ENCODE measurements at regions of chr16 and their contacts with region 1.

Region 1: GRCh38 chr16:75074920-75075687 is 41.5 kb downstream of the LDHD start:
- DNase-seq: peak; percentile 97 to 100 (median 99)
- H3K4me3 ChIP-seq: peak overlapping the region in 4 of 7 experiments; percentile 2 to 48 (median 22)
- H3K27ac ChIP-seq: peak overlapping the region; percentile 61 to 80
- H3K4me1 ChIP-seq: peaks cover 20 to 97% (median 89%) of the 10 kb centered on the region in 4 experiments
- H3K27me3 ChIP-seq: no peaks in the 10 kb centered on the region

Region 2: DNA sequence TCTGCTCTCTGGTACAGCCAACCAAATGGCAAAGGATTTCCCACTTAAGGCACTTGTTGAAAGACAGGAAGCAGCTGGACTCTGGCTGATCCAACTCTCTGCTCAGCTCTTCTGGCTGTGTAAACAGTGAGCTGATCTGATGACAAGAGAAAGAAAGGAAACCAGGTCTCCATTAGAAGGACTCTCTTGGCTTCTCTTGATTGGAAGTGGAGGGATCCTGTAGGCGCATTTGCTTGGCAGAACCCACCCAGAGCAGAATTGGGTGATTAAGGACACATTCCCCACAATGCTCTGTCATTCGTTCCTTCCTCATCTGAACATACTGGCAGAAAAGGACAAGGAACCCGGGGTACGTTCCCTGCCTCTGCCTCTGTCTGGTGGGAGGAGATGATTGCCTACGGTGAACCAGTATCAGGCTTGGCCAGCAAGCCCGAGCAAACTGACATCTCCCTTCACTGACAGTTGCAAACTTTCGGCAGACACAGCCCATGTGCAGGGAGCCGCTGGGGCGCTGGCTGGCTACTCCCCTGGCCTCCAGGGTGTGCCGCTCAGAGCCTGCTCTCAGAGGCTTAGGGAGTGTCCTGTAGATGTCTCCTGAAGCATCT is 12.4 kb after region 1 on chr16:
- CTCF ChIA-PET with region 1: interaction called, 49 read pairs
- POLR2A ChIA-PET with region 1: interaction called, 8 read pairs
- DNase-seq: peak in 2 of 3 donors; percentile 79 to 87
- H3K4me3 ChIP-seq: peak overlapping the region in 4 of 7 experiments; percentile 17 to 58 (median 34)
- H3K27ac ChIP-seq: peak overlapping the region; percentile 11 to 73
- H3K4me1 ChIP-seq: peaks cover 16 to 91% (median 66%) of the 10 kb centered on the region in 4 experiments
- H3K27me3 ChIP-seq: no peaks in the 10 kb centered on the region

Region 3: DNA sequence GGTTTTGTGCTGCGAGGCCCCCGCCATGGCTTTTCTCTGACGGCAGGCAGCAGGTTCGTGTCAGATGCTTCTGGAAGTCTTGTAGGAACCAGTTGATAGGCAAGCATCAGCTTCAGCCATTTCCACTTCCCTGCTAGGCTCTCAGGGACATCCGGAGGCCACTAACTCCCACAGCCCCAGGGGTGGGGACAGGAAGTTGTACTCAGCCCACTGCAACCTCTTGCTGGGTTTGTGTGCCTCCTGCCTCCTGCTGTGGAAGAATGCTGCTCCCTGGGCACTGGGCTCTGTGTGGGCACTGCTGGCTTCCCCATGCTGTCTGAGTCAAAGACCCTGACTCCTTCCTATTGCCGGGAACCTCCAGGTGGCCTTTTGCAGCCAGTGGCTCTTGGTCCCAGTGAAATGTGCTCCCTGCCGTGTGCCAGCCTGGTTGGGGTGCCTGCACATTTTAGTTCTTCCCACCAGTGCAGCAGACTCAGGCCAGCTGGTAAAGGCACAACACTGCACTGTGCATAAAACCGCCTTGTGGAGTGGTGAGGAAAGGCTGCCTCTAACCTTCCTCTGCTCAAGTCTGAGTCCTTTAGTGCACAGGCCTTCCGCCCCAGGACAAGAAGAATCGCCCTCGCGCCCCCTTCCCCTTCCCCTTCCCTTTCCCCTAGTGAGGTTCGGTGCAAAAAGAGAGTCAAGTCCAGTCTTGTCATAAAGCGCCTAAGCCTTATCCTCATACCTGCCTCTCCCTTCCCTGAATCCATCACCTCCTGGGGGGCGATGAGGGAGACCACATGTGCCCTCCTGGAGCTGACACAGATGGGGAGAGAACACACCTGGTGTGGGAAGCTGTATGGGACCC is 24.9 kb after region 1 on chr16:
- CTCF ChIA-PET with region 1: interaction called, 12 read pairs
- POLR2A ChIA-PET with region 1: interaction called, 7 read pairs
- DNase-seq: peak in 2 of 3 donors; percentile 60 to 62
- H3K4me3 ChIP-seq: peak overlapping the region in 4 of 7 experiments; percentile 8 to 30 (median 22)
- H3K27ac ChIP-seq: peak overlapping the region in 1 of 2 experiments; percentile 15
- H3K4me1 ChIP-seq: peaks cover 5 to 90% (median 79%) of the 10 kb centered on the region in 4 experiments
- H3K27me3 ChIP-seq: no peaks in the 10 kb centered on the region